Mammary epithelial cell (primary cell): ENCODE measurements at regions of chr15 and their contacts with region 1.

Region 1: DNA sequence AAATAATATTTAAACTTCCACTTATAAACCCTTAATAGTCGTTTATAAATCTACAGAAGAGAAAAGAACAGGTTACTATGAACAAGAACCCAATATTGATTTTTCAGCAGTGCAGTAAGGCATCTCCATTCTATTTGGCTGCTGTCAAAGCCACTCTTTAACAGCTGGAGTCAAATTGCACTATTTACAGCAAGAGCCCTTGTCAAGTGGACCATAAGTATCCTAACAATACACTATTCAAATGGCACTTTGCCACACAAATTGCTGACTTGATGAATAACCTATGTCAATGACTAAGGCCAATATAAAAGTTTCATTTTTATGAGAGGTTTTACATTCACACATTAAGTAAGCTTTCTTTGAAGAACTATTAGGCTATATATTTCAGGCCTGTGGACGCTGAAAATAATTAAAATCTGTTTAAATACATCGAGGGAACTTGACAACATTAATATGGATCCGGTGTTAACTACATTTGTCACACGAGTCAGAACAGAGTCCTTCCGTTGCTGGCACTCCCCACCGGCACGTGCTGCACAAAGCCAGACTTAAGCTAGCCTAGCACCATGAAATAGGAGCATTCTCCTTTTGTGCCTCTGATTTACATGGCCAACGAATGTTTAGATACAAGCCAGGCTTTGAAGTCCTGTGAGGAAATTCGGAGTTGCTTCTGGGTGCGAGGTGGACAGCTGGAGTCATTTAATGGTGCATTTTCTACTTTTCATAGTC is 100.5 kb downstream of the WDR72 start:
- DNase-seq: no peak
- H3K4me3 ChIP-seq: no peak overlapping the region
- H3K27ac ChIP-seq: no peak overlapping the region
- H3K4me1 ChIP-seq: no peaks in the 10 kb centered on the region
- H3K27me3 ChIP-seq: no peaks in the 10 kb centered on the region
- CTCF ChIP-seq: no peak

Region 2: DNA sequence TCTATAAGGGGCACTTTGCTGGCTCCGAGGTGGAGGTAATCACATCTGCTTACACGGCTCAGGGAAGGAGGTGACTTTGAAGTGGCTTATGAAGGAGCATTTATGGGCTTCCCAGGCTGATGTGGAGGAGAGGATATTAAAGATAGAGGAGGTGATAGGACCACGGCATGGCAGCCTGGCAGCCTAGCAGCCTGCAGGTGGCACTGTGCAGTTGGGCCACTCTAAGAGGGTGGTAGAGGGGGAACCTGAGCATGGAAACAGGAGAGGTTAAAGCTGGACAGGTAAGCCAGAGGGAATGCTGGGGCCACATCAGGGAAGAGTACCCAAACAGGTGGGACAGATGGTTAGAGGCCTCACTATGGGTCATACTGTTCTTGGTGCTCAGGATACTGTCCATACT is 274.6 kb before region 1 on chr15:
- CTCF ChIA-PET with region 1: no interaction called
- dilution Hi-C with region 1: no loop called
- in situ Hi-C with region 1: no loop called
- intact Hi-C with region 1: loop called (anchors 2 kb)
- DNase-seq: no peak
- H3K4me3 ChIP-seq: no peak overlapping the region
- H3K27ac ChIP-seq: no peak overlapping the region
- H3K4me1 ChIP-seq: no peaks in the 10 kb centered on the region
- H3K27me3 ChIP-seq: no peaks in the 10 kb centered on the region
- CTCF ChIP-seq: no peak

Region 3: DNA sequence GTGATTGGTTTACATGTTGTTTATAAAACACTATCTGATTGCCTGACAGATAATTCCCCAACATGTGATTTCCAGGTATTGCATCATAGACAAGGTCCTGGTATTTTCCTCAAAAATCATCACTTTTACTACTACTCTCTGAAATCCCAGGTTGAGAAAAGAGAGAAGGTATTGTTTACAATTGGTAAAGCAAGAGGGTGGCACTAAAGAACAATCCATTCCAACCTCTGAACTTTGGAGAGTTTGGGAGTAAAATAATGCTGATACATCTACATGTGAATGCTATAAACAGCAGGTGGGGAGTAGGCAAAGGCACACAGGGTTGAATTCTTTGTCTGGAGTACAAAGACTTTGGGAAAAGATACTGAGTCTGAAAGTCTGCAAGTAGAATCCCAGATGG is 33.7 kb before region 1 on chr15:
- CTCF ChIA-PET with region 1: no interaction called
- dilution Hi-C with region 1: no loop called
- in situ Hi-C with region 1: no loop called
- intact Hi-C with region 1: no loop called
- DNase-seq: no peak
- H3K4me3 ChIP-seq: no peak overlapping the region
- H3K27ac ChIP-seq: no peak overlapping the region
- H3K4me1 ChIP-seq: no peaks in the 10 kb centered on the region
- H3K27me3 ChIP-seq: no peaks in the 10 kb centered on the region
- CTCF ChIP-seq: no peak